Activated T-helper 1 cell treated with anti-CD3 and anti-CD28 coated beads, Interleukin-12 subunit alpha, Interleukin-12 subunit beta, Interleukin-2, Interleukin-4 antibody, amounts not matched to agents 30 ng/mL and 10 ng/mL and 1 ng/mL, durations not matched to agents 14 hours and 24 hours and 36 hours (primary cell): ENCODE measurements at regions of chr2 and their contacts with region 1.

Region 1: DNA sequence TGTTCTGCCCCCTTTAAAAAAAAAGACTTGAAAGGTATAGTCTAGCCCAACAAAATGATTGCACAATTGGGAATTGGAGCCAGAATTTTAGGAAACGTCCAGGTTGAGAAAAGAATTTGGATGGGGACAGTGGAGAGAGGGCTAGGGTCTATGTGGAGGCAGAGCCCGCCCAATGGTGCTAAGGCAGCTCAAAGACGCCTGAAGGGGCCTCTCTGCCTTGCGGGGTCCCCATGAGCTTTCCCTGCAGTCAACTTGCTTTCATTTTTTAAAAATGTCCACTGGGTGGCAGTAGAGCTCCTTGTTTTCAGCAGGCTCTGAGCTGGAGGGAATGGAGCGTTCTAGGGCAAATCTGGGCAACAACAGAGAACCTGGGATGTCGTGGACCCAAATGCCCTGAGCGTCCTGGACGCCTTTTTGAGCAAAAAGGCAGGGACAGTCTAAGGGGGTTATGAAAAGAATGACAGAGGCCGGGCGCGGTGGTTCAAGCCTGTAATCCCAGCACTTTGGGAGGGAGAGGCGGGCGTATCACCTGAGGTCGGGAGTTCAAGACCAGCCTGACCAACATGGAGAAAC is 40.2 kb upstream of the ITM2C start:
- DNase-seq: peak; percentile 42
- H3K4me3 Mint-ChIP-seq: peak overlapping the region; percentile 37
- H3K27ac Mint-ChIP-seq: no peak overlapping the region
- H3K4me1 Mint-ChIP-seq: peaks cover 23% of the 10 kb centered on the region
- H3K27me3 Mint-ChIP-seq: peaks cover 35% of the 10 kb centered on the region

Region 2: DNA sequence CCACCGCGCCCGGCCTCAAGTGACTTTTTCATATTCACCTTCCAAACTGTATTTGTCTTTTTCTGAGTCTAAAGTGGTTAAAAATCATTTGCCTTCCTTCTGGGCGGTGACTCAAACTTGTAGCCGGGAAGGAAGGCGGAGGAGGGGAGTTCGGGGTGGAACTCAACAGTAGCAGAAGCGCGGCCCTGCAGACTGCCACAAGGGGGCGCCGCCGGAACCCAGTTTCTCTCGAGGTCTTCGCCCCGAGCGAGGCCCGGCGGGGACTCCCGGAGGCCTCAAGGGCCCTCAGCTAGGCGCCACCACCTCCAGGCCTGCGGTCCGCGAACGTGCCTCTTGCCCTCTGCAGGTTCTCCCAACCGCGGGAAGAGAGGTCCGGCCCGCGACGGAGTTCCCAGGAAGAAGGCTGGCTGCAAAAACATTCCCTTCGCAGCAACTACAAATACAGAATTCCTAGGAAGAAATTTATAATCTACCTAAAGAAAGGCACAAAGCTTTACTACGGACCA is 23.4 kb after region 1 on chr2:
- intact Hi-C with region 1: loop called (anchors 1 kb)
- DNase-seq: peak; percentile 75
- H3K4me3 Mint-ChIP-seq: no peak overlapping the region
- H3K27ac Mint-ChIP-seq: no peak overlapping the region
- H3K4me1 Mint-ChIP-seq: peaks cover 22% of the 10 kb centered on the region
- H3K27me3 Mint-ChIP-seq: peaks cover 60% of the 10 kb centered on the region

Region 3: DNA sequence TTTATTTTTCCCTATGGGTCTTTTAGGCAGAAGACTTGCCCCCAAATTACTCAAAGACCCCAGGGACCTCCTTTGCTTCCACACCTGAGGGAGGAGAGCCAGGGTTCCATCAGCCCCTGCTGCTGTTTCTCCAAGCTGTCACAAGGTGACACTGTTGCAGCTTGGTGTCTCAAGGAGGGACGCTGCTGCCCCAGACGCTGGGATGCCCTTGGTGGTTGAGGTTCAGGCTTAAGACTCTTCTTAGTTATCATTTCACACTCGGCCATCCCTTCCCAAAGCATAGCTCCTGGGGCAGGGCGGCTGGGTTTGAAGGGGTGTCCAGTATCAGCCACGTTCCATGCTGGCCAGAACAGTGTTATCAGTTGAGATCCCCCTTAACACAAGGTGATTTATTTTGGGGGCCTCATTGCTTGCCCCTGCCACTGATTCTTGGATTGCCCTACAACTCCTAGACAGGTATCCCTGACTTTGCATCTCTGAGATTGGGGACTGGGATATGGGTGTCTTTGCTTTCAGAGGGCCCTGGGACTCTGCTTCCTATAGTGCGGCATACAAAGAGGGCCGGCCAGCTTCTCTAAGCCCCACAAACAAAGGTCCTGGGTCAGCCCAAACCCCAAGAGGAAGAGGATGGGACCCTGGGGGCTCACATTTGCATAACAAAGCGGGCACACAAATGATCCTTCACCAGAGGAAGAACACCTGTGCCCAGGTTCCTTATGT is 77.8 kb after region 1 on chr2:
- intact Hi-C with region 1: loop called (anchors 5 kb)
- DNase-seq: no peak
- H3K4me3 Mint-ChIP-seq: no peak overlapping the region
- H3K27ac Mint-ChIP-seq: no peak overlapping the region
- H3K4me1 Mint-ChIP-seq: peaks cover 17% of the 10 kb centered on the region
- H3K27me3 Mint-ChIP-seq: peaks cover 64% of the 10 kb centered on the region

Region 4: GRCh38 chr2:231056453-231057424 is 232.2 kb after region 1 on chr2 and contains the start of gene PSMD1:
- intact Hi-C with region 1: loop called (anchors 1 kb)
- DNase-seq: peak; percentile 89
- H3K4me3 Mint-ChIP-seq: peak within 1 kb of the TSS; percentile 98
- H3K27ac Mint-ChIP-seq: peak within 1 kb of the TSS; percentile 100
- H3K4me1 Mint-ChIP-seq: peaks cover 52% of the 10 kb centered on the region
- H3K27me3 Mint-ChIP-seq: no peaks in the 10 kb centered on the region
- total RNA-seq, gene PSMD1: 172 and 181 TPM in 2 replicates

Region 5: DNA sequence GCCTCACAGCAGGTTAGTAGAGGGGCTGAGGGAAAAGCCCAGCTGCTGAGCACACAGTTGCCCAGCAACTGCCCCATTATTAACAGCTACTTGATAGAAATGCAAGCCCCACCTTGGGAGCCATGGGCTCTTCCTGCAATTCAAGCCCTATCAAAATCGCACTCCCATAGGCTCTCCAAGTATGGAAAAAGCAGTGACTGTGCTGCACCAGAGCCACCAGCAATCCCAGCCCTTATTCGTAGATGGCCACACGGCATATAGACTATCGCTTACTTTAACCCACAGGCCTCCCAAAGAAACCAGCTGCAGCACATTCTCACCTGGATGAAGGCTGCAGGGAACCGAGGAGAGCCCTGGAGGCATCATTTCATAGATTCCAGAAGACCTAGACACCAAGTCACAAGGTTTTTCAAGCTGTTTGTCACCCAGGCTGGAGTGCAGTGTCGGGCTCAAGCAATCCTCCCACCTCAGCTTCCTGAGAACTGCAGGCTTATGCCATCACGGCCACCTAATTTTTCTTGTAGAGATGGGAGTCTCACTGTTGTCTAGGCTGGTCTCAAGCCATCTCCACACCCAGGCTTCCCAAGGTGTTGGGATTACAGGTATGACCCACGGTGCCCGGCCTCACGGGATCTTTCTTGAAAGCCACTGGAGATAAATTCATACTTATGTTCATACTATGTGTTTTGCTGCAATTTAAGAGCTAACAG is 628.5 kb after region 1 on chr2:
- intact Hi-C with region 1: loop called (anchors 10 kb)
- DNase-seq: no peak
- H3K4me3 Mint-ChIP-seq: no peak overlapping the region
- H3K27ac Mint-ChIP-seq: peak overlapping the region; percentile 52
- H3K4me1 Mint-ChIP-seq: peaks cover 17% of the 10 kb centered on the region
- H3K27me3 Mint-ChIP-seq: no peaks in the 10 kb centered on the region